MCF 10A (cell line): ENCODE measurements at regions of chr7 and their contacts with region 1.

Region 1: DNA sequence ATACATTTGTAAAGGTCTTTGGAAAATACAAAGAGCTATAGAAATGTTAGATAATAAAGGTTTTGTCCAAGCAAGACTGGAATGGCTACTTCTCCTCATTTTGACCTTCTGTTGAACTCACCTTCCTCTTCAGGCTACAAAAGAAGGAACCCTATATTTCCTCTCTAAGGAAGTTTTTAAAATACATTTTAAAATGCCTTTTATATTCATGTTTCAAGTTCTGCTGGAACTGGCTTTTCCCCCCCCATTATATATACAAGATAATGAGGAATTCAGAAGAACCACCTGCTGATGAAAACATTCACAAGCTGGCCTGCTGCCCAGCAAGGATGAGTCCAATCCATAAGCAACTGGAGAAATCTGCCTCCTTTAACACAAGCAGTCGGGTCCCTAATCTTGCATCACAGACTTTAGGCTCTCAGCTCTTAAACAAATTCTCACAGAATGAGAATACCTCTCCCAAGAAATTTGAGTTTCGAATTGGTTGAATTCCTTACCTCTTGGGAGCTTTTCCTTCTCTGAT is 44.6 kb downstream of the MTERF1 start:
- DNase-seq: peak; percentile 51
- H3K4me3 Mint-ChIP-seq: no peak overlapping the region
- H3K27ac Mint-ChIP-seq: no peak overlapping the region
- H3K4me1 Mint-ChIP-seq: no peaks in the 10 kb centered on the region
- H3K27me3 Mint-ChIP-seq: no peaks in the 10 kb centered on the region
- CTCF ChIP-seq: no peak

Region 2: GRCh38 chr7:91852263-91852741 is 16.4 kb after region 1 on chr7:
- CTCF ChIA-PET with region 1: interaction called, 32 read pairs
- POLR2A ChIA-PET with region 1: interaction called, 4 read pairs
- intact Hi-C with region 1: no loop called
- DNase-seq: peak; percentile 63
- H3K4me3 Mint-ChIP-seq: no peak overlapping the region
- H3K27ac Mint-ChIP-seq: no peak overlapping the region
- H3K4me1 Mint-ChIP-seq: peaks cover 26% of the 10 kb centered on the region
- H3K27me3 Mint-ChIP-seq: no peaks in the 10 kb centered on the region
- CTCF ChIP-seq: peak; percentile 25

Region 3: DNA sequence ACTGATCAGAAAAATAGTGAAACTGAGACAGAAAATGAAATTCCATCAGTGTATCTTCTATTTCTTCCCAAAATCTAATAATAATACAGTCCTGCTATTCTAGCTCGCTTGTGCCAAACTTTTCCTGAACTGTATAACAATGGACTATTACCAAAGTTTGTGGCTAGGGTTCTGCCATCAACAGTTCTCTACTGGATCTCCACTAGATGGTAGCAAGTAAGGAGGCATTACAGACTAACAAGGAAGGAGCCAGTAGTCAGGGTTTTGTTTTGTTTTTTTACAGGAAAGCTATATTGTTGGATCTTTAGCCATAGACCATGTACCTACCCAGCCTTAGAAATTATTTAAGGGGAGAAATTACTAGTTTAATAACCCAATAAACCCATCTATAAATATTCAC is 33.8 kb after region 1 on chr7:
- CTCF ChIA-PET with region 1: interaction called, 276 read pairs
- POLR2A ChIA-PET with region 1: interaction called, 3 read pairs
- intact Hi-C with region 1: no loop called
- DNase-seq: no peak
- H3K4me3 Mint-ChIP-seq: no peak overlapping the region
- H3K27ac Mint-ChIP-seq: no peak overlapping the region
- H3K4me1 Mint-ChIP-seq: peaks cover 5% of the 10 kb centered on the region
- H3K27me3 Mint-ChIP-seq: no peaks in the 10 kb centered on the region
- CTCF ChIP-seq: no peak

Region 4: DNA sequence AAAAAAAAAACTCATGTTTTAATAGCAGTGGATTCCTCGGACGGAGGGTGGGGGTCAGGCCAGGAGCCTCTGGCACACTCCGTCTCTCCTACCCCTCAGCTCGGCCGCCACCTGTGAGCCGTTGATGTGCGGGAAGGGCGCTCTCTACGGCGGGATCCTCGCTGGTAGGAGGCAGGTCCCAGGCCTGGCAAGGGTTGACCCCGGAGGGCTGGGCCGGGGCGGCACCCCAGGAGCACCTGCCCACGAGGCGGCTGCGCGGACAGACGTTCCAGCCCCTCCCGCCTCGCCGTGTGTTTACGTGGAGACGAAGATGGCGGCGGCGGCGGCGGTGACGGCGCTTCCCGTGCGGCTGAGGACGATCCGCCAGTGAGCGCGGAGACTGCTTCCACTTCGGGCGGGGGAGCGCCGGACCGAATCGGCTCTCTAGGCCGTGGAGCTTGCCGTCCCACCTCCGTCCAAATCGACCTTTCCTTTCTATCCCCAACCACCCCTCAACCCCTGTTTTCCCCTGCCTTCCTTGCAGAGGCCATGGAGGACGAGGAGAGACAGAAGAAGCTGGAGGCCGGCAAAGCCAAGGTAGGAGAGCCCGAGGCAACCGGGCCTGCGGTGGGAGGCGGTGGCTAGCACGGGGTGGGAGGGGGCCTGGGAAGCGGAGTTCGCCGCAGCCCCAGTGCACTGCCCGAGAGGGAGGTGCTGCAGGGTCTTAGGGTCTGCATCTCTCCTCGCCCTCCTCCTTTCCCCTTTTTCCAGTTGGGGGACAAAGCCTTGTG is 104.8 kb after region 1 on chr7 and contains the start of gene AKAP9:
- CTCF ChIA-PET with region 1: interaction called, 3 read pairs
- POLR2A ChIA-PET with region 1: interaction called, 14 read pairs
- intact Hi-C with region 1: no loop called
- DNase-seq: peak; percentile 88
- H3K4me3 Mint-ChIP-seq: peak within 1 kb of the TSS; percentile 86
- H3K27ac Mint-ChIP-seq: peak within 1 kb of the TSS; percentile 93
- H3K4me1 Mint-ChIP-seq: peaks cover 11% of the 10 kb centered on the region
- H3K27me3 Mint-ChIP-seq: no peaks in the 10 kb centered on the region
- CTCF ChIP-seq: no peak
- total RNA-seq, gene AKAP9: 36.8 and 39.2 TPM in 2 replicates

Region 5: DNA sequence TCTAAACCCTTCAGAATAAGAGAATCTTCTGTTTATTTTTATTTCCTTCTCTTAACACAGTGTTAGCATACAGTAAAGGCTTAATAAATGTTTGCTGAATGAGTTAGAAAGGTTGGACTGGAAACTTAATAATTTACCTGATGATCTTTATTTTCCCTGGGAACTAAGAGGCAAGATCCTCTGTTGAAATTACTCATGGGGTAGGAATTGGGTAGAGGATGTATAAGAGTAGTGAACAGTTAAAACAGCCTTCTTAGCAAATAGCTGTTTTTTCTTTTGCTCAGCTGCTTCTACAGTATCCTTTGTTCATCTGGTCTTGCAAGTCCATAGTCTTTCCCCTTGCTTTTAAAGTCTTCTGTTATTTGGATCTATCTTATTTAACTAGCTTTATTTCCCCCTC is 184.7 kb after region 1 on chr7:
- CTCF ChIA-PET with region 1: no interaction called
- POLR2A ChIA-PET with region 1: no interaction called
- intact Hi-C with region 1: no loop called
- DNase-seq: no peak
- H3K4me3 Mint-ChIP-seq: no peak overlapping the region
- H3K27ac Mint-ChIP-seq: no peak overlapping the region
- H3K4me1 Mint-ChIP-seq: no peaks in the 10 kb centered on the region
- H3K27me3 Mint-ChIP-seq: no peaks in the 10 kb centered on the region
- CTCF ChIP-seq: no peak

Region 6: DNA sequence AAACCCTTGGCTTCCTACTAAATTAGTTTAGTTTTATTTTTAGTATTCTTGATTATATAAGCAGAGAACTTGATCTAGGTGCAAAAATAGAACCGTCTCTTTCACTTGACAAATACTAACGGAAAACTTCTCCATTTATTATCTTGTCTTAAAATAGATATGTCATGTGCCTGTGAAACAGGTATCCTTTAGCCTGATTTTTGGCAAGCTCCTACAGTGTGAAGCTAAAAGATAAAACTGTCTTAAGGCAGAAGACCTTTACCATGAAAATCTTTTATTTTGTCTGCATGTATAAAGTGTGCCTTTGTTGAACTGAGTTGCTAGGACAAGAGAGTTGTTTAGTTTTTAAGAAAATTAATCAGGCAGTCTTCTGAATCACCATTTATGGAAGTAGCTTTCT is 207.7 kb after region 1 on chr7:
- CTCF ChIA-PET with region 1: interaction called, 3 read pairs
- POLR2A ChIA-PET with region 1: no interaction called
- intact Hi-C with region 1: loop called (anchors 2 kb)
- DNase-seq: no peak
- H3K4me3 Mint-ChIP-seq: no peak overlapping the region
- H3K27ac Mint-ChIP-seq: no peak overlapping the region
- H3K4me1 Mint-ChIP-seq: no peaks in the 10 kb centered on the region
- H3K27me3 Mint-ChIP-seq: no peaks in the 10 kb centered on the region
- CTCF ChIP-seq: no peak